ENCODE measurements at regions of chr4 and their contacts with region 1.

Region 1: GRCh38 chr4:141133146-141133998 is at the start of gene RNF150:
- DNase-seq: peak; percentile 71
- H3K4me3 ChIP-seq: peak within 1 kb of the TSS; percentile 97
- H3K27me3 ChIP-seq: no peaks in the 10 kb centered on the region
- CTCF ChIP-seq: peak; percentile 85
- polyA plus RNA-seq, gene RNF150: 39.4 and 47.7 TPM in 2 replicates

Region 2: DNA sequence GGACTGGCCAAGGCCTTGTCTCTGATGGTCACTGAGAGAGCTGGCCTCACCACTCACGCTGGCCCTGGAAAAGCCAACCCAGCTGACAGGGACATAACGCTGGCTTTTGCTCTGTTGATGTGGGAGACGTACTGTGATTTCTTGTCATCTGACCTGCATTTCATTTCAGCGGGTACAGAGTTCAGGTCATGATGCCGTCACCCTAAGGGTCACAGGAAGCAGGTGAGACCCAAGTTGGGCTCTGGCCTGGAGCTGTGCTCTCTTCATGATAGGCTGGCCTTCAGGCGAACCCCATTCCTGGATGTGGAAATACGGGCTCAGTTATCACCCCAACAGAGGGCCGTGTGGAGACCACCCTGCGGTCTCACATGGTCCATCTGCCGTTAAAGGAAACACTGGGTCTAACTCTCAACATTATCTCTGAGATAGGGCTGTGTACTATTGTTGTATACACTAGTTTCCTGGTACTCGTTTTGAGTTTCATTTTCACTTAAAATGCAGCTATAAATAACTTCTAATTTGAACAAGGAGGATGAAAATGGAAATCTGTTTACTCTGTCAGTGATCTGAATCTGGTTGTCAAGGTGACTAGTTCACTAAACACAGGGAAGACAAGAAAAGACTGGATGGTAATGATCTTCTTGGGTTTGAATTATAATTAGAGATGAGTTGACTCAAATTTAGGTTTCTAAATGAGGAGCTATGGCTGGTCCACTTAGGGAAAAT is 466.3 kb before region 1 on chr4:
- CTCF ChIA-PET with region 1: no interaction called
- POLR2A ChIA-PET with region 1: no interaction called
- DNase-seq: no peak
- H3K4me3 ChIP-seq: no peak overlapping the region
- H3K27me3 ChIP-seq: no peaks in the 10 kb centered on the region
- CTCF ChIP-seq: no peak

Region 3: GRCh38 chr4:140861359-140862176 is 271.8 kb before region 1 on chr4:
- CTCF ChIA-PET with region 1: interaction called, 88 read pairs
- POLR2A ChIA-PET with region 1: no interaction called
- DNase-seq: peak; percentile 46
- H3K4me3 ChIP-seq: no peak overlapping the region
- H3K27me3 ChIP-seq: no peaks in the 10 kb centered on the region
- CTCF ChIP-seq: peak; percentile 71

Region 4: GRCh38 chr4:140884431-140885058 is 248.8 kb before region 1 on chr4:
- CTCF ChIA-PET with region 1: interaction called, 17 read pairs
- POLR2A ChIA-PET with region 1: no interaction called
- DNase-seq: no peak
- H3K4me3 ChIP-seq: no peak overlapping the region
- H3K27me3 ChIP-seq: no peaks in the 10 kb centered on the region
- CTCF ChIP-seq: peak; percentile 77

Region 5: GRCh38 chr4:141020801-141021261 is 112.5 kb before region 1 on chr4:
- CTCF ChIA-PET with region 1: interaction called, 28 read pairs
- POLR2A ChIA-PET with region 1: interaction called, 4 read pairs
- DNase-seq: peak; percentile 56
- H3K4me3 ChIP-seq: no peak overlapping the region
- H3K27me3 ChIP-seq: no peaks in the 10 kb centered on the region
- CTCF ChIP-seq: no peak

Measured in BJ (cell line).